ENCODE measurements at regions of chr4 and their contacts with region 1.

Region 1: DNA sequence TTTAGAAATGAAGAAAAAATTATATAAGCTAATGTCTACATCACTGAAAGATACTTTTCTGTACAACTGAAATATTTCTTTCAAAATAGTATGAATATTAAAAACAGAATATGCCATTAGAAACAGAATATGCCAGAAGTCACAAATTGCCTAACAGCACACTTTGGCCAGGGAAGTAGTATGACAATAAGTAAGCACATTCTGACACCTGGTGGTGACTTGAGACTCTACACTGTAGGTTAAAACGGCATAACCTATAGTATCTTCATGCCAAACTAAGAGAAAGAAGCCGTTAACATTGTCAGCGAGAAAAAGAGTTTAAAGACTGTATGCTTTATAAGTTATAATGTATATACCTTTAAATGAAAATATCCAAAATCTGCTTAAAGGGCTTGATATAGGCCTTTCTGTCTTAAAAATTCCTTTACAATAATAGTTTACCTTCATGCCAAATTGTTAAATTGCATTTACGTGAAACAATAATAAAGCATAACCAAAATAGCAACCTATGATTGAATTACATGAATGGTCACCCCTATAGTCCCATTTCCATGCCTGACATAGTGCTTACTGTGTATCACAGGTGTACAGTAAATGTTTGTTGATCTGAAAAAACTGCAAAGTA is 32.8 kb downstream of the FAM13A start:
- DNase-seq: peak; percentile 30 to 70
- ATAC-seq: peak; percentile 92 to 95
- H3K4me3 ChIP-seq: no peak overlapping the region
- H3K27ac ChIP-seq: no peak overlapping the region; a peak in 1 of 6 replicates
- H3K4me1 ChIP-seq: no peaks in the 10 kb centered on the region; the same call in 2 of the 3 replicates
- CTCF ChIP-seq: peak; percentile 81
- EP300 ChIP-seq: no peak
- POLR2A ChIP-seq: no peak
- RAD21 ChIP-seq: peak; percentile 87 to 90

Region 2: DNA sequence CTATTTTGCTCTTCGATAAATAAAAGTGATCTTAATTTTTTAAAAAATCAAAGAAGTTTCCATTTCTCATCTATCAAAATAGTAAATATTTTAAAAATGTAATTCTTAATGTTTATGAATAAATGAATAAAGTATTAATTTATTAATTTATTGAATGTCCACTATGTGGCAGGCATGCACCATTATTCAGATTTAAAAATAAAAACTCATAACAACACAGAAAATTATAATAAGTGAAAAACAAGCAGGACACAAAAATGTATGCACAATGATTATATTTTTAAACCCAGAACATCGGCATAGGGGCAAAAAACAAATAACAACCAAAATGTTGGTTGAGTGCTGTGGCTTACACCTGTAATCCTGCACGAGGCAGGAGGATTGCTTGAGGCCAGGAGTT is 495.3 kb before region 1 on chr4:
- CTCF ChIA-PET with region 1: interaction called, 11 read pairs
- POLR2A ChIA-PET with region 1: no interaction called
- DNase-seq: no peak
- ATAC-seq: no peak
- H3K4me3 ChIP-seq: no peak overlapping the region
- H3K27ac ChIP-seq: no peak overlapping the region
- H3K4me1 ChIP-seq: peaks cover 16% of the 10 kb centered on the region; the same call in 2 of the 3 replicates
- CTCF ChIP-seq: peak; percentile 39
- EP300 ChIP-seq: no peak
- POLR2A ChIP-seq: no peak
- RAD21 ChIP-seq: peak; percentile 38 to 64

Region 3: GRCh38 chr4:88706574-88706973 is 317.6 kb before region 1 on chr4:
- CTCF ChIA-PET with region 1: interaction called, 29 read pairs
- POLR2A ChIA-PET with region 1: no interaction called
- DNase-seq: peak; percentile 3 to 58
- ATAC-seq: peak; percentile 91 to 93; a peak in 5 of 6 replicates
- H3K4me3 ChIP-seq: no peak overlapping the region
- H3K27ac ChIP-seq: peak overlapping the region; percentile 42 to 62; a peak in 3 of 6 replicates
- H3K4me1 ChIP-seq: peaks cover 10% of the 10 kb centered on the region
- CTCF ChIP-seq: peak; percentile 63
- EP300 ChIP-seq: no peak
- POLR2A ChIP-seq: no peak
- RAD21 ChIP-seq: peak; percentile 74

Region 4: GRCh38 chr4:89064848-89065247 is 40.7 kb after region 1 on chr4:
- CTCF ChIA-PET with region 1: no interaction called
- POLR2A ChIA-PET with region 1: no interaction called
- DNase-seq: no peak
- ATAC-seq: no peak
- H3K4me3 ChIP-seq: no peak overlapping the region
- H3K27ac ChIP-seq: no peak overlapping the region
- H3K4me1 ChIP-seq: no peaks in the 10 kb centered on the region
- CTCF ChIP-seq: no peak
- EP300 ChIP-seq: no peak
- POLR2A ChIP-seq: no peak
- RAD21 ChIP-seq: no peak